Activated T-helper 2 cell treated with anti-CD3 and anti-CD28 coated beads, Interferon-gamma antibody, Interleukin-2, Interleukin-4, amounts not matched to agents 10 μg/mL and 5 μg/mL and 100 μg/mL, durations not matched to agents 14 hours and 24 hours and 36 hours (primary cell): ENCODE measurements at regions of chr2 and their contacts with region 1.

Region 1: GRCh38 chr2:214809751-214810564 is 475 bp upstream of the BARD1 start:
- DNase-seq: peak; percentile 99
- H3K4me3 Mint-ChIP-seq: peak overlapping the region; percentile 100
- H3K27ac Mint-ChIP-seq: peak overlapping the region; percentile 78
- H3K4me1 Mint-ChIP-seq: peaks cover 34% of the 10 kb centered on the region
- H3K27me3 Mint-ChIP-seq: peaks cover 25% of the 10 kb centered on the region

Region 2: GRCh38 chr2:213284105-213285090 is 1525.6 kb before region 1 on chr2 and contains the start of gene SPAG16:
- intact Hi-C with region 1: loop called (anchors 10 kb)
- DNase-seq: peak; percentile 97
- H3K4me3 Mint-ChIP-seq: peak within 1 kb of the TSS; percentile 90
- H3K27ac Mint-ChIP-seq: peak within 1 kb of the TSS; percentile 84
- H3K4me1 Mint-ChIP-seq: peaks cover 26% of the 10 kb centered on the region
- H3K27me3 Mint-ChIP-seq: peaks cover 4% of the 10 kb centered on the region
- total RNA-seq, gene SPAG16: 7.5 and 8.0 TPM in 2 replicates

Region 3: DNA sequence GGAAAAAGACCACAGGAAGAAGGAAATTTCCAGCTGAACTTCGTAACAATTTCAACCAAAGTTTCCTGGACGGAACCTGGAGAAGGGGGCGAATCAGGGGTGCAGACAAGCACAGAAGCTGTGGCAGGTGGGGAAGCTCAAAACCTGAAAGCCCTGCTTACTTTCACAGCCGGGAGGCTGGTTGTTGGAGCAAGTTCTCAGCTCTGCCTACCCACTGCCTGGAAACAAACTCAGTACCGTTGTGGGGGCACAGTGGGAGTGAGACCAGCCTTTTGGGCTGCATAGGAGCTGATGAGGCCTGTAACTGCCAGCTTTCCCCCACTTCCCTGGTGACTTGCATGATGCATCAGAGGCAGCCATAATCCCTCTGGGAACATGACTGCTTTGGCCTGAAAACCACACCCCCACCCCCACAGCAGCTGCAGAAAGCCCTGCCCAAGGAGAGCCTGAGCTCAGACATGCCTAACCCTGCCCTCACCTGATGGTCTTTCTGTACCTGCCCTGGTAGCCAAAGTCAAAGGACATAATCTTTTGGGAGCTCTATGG is 606.1 kb before region 1 on chr2:
- intact Hi-C with region 1: no loop called
- DNase-seq: no peak
- H3K4me3 Mint-ChIP-seq: no peak overlapping the region
- H3K27ac Mint-ChIP-seq: no peak overlapping the region
- H3K4me1 Mint-ChIP-seq: no peaks in the 10 kb centered on the region
- H3K27me3 Mint-ChIP-seq: no peaks in the 10 kb centered on the region

Region 4: GRCh38 chr2:214737188-214737587 is 72.8 kb before region 1 on chr2:
- intact Hi-C with region 1: loop called (anchors 2 kb)
- DNase-seq: no peak
- H3K4me3 Mint-ChIP-seq: no peak overlapping the region
- H3K27ac Mint-ChIP-seq: no peak overlapping the region
- H3K4me1 Mint-ChIP-seq: peaks cover 21% of the 10 kb centered on the region
- H3K27me3 Mint-ChIP-seq: no peaks in the 10 kb centered on the region

Region 5: GRCh38 chr2:214774108-214774507 is 35.9 kb before region 1 on chr2:
- intact Hi-C with region 1: loop called (anchors 5 kb)
- DNase-seq: no peak
- H3K4me3 Mint-ChIP-seq: no peak overlapping the region
- H3K27ac Mint-ChIP-seq: no peak overlapping the region
- H3K4me1 Mint-ChIP-seq: peaks cover 10% of the 10 kb centered on the region
- H3K27me3 Mint-ChIP-seq: no peaks in the 10 kb centered on the region

Region 6: DNA sequence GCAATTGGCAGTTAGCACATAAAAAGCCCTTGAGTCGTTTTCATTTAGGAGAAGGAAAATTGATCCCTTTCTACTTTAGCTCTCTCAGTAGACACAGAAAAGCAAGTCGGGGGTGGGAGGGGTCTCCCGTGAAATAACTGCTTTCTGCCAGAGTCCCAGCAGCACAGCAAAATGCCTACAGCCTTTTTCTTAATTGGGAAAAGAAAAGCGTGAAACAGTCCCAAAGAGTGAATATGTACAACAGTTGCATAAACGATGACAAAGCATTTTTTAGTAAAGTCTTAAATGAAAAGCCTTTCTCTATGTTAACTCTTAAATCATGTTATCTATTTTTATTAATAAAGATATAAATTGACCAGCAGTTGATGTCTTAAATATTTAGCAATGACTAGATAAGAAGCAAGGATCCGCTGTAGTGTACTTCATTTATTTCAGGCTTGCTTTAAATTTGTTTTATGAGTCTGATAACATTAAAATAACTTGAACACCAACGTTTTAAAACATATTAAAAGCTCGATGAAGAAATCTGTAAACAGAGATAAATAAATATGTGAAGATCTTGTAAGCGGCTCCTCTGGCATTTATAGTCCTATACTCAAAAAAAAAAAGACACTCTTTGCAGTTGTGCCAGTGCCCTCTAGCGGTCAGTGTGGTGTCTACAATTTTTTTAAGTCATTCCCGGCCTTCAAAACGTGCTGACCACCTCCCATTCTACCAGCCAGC is 459.6 kb after region 1 on chr2:
- intact Hi-C with region 1: loop called (anchors 10 kb)
- DNase-seq: peak; percentile 16
- H3K4me3 Mint-ChIP-seq: no peak overlapping the region
- H3K27ac Mint-ChIP-seq: no peak overlapping the region
- H3K4me1 Mint-ChIP-seq: peaks cover 11% of the 10 kb centered on the region
- H3K27me3 Mint-ChIP-seq: no peaks in the 10 kb centered on the region

Region 7: GRCh38 chr2:215311625-215312396 is 501.9 kb after region 1 on chr2 and contains the start of gene ATIC:
- intact Hi-C with region 1: loop called (anchors 1 kb)
- DNase-seq: peak; percentile 91
- H3K4me3 Mint-ChIP-seq: peak within 1 kb of the TSS; percentile 96
- H3K27ac Mint-ChIP-seq: peak within 1 kb of the TSS; percentile 93
- H3K4me1 Mint-ChIP-seq: peaks cover 30% of the 10 kb centered on the region
- H3K27me3 Mint-ChIP-seq: peaks cover 4% of the 10 kb centered on the region
- total RNA-seq, gene ATIC: 284 and 296 TPM in 2 replicates

Region 8: GRCh38 chr2:216412022-216412999 is 1602.4 kb after region 1 on chr2 and contains the start of gene SMARCAL1:
- intact Hi-C with region 1: loop called (anchors 5 kb)
- DNase-seq: peak; percentile 97
- H3K4me3 Mint-ChIP-seq: peak within 1 kb of the TSS; percentile 98
- H3K27ac Mint-ChIP-seq: peak within 1 kb of the TSS; percentile 94
- H3K4me1 Mint-ChIP-seq: peaks cover 19% of the 10 kb centered on the region
- H3K27me3 Mint-ChIP-seq: peaks cover 13% of the 10 kb centered on the region
- total RNA-seq, gene SMARCAL1: 32.8 and 34.1 TPM in 2 replicates